ENCODE measurements at regions of chrX and their contacts with region 1.

Region 1: DNA sequence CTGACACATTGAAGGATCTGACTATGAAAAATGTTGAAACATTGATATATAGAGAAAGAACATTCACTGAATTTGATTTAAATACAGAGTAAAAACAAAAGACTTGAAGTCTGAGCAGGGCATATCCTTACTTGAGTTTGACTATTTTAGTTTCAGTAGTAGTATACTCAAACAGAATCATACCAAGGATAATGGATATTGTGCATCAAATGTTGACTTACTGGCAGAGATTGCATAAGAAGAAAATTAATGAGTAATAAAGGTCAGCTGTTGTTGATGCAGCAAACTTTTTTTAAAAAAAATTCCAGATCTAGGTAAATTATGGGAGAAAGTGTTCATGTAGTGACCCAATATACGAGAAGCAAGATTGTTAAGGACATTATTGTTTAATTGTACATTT is 94.5 kb upstream of the APOOL start:
- DNase-seq: no peak

Region 2: DNA sequence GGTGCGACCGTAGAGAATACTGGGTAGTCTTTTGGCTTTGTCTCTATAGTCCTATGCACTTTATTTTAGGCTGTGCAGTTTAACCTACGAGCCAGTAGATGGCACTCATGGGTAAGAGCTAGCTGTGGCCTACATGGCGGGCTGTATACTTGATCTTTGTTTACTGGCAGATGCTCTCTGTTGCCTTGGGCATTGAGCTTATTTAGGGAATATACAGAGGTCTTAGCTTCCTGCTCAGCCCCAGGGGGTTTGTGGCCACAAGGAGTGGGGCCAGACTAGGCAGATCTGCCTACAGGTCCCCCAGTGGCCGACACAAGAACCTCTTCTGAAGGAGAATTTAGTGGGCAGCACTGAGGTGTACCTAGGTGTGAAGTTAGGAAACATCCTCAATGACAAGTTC is 179.3 kb before region 1 on chrX:
- intact Hi-C with region 1: loop called (anchors 2 kb)
- DNase-seq: no peak

Region 3: DNA sequence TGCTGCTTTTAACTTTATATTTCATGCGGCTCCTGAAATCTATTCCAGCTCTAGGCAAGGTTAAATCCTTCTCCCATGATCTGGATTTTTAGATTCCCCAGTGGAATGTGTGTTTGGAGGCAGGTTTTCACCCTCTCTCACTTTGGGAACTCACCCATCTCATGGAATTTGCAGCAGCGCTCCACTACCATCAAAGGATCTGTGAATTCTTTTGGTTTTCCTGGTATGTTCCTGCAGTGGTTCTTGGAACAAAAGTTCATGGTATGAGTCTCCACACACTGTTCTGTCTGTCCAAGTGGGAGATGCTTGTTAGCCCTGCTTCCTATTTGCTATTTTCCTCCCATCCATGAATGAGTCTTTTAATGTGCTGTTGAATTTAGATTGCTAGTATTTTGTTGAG is 108.6 kb after region 1 on chrX:
- intact Hi-C with region 1: no loop called
- DNase-seq: no peak